ENCODE measurements at regions of chr3 and their contacts with region 1.

Region 1: DNA sequence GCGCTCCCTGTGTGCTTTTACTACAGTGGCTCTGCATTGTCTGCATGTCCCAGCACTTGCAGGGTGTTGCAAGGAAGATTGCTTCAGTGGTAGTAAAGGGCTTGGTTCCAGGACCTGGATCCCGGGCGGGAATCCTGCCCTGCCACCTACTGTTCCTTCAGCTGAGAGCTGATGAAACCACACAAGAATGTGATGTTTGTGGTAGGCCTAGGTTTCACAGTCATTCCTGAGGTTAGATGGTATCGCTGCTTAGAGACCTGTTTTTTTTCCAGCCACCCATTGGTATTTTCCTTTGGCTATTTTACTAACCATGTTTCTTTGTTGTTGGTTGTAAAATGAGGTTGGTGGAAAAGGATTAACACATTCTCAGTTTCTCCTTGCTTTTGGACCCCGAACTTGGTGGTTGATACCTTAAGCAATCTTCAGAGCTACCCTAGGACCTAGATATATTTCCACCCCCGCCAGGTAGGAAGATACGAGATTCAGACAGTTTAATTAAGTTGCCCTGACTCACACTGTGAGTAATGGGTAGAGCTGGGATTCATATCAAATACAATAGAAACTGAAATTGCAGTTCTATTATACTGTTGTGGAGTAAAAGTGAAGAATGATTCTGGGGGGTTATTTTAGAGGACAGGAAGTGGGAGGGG is 11.4 kb downstream of the GPR87 start:
- DNase-seq: peak; percentile 96
- ATAC-seq: peak; percentile 96
- H3K4me3 ChIP-seq: peak overlapping the region; percentile 6 to 39; a peak in 3 of 4 replicates
- H3K27ac ChIP-seq: peak overlapping the region; percentile 75
- H3K4me1 ChIP-seq: peaks cover 26 to 62% of the 10 kb centered on the region in 2 experiments
- H3K27me3 ChIP-seq: no peaks in the 10 kb centered on the region
- CTCF ChIP-seq: peak in 2 of 3 experiments; percentile 12 to 21; a peak in 1 of 6 replicates
- POLR2A ChIP-seq: no peak
- RAD21 ChIP-seq: peak; percentile 61

Region 2: GRCh38 chr3:151316267-151316991 is 11.2 kb after region 1 on chr3 and contains the start of gene GPR87:
- CTCF ChIA-PET with region 1: no interaction called
- POLR2A ChIA-PET with region 1: interaction called, 9 read pairs
- RAD21 ChIA-PET with region 1: interaction called in 1 of 2 experiments, 3 read pairs
- intact Hi-C with region 1: loop called (anchors 1 kb)
- DNase-seq: peak; percentile 88
- ATAC-seq: peak; percentile 97
- H3K4me3 ChIP-seq: peak within 1 kb of the TSS; percentile 25 to 53
- H3K27ac ChIP-seq: peak within 1 kb of the TSS; percentile 66; the same call in 1 of the 2 replicates
- H3K4me1 ChIP-seq: peaks cover 44 to 52% of the 10 kb centered on the region in 2 experiments
- H3K27me3 ChIP-seq: no peaks in the 10 kb centered on the region
- CTCF ChIP-seq: no peak
- POLR2A ChIP-seq: no peak
- RAD21 ChIP-seq: peak; percentile 13; the same call in 1 of the 2 replicates
- total RNA-seq, gene GPR87: 3.8 TPM

Region 3: GRCh38 chr3:151327571-151328198 is 22.5 kb after region 1 on chr3:
- CTCF ChIA-PET with region 1: interaction called, 10 read pairs
- POLR2A ChIA-PET with region 1: no interaction called
- RAD21 ChIA-PET with region 1: no interaction called
- intact Hi-C with region 1: loop called (anchors 1 kb)
- DNase-seq: no peak
- ATAC-seq: peak; percentile 60
- H3K4me3 ChIP-seq: no peak overlapping the region
- H3K27ac ChIP-seq: no peak overlapping the region
- H3K4me1 ChIP-seq: peaks cover 15 to 22% of the 10 kb centered on the region in 2 experiments
- H3K27me3 ChIP-seq: no peaks in the 10 kb centered on the region
- CTCF ChIP-seq: peak; percentile 43 to 73 (median 63); a peak in 4 of 6 replicates
- POLR2A ChIP-seq: no peak
- RAD21 ChIP-seq: peak; percentile 66